Pancreas (tissue), 10 donors: ENCODE measurements at regions of chr2 and their contacts with region 1.

Region 1: GRCh38 chr2:58680755-58681310 is 439.7 kb upstream of the FANCL start:
- DNase-seq: no peak
- ATAC-seq: no peak
- H3K4me3 ChIP-seq: no peak overlapping the region
- H3K27ac ChIP-seq: no peak overlapping the region
- H3K4me1 ChIP-seq: no peaks in the 10 kb centered on the region
- H3K27me3 ChIP-seq: no peaks in the 10 kb centered on the region
- CTCF ChIP-seq: no peak

Region 2: DNA sequence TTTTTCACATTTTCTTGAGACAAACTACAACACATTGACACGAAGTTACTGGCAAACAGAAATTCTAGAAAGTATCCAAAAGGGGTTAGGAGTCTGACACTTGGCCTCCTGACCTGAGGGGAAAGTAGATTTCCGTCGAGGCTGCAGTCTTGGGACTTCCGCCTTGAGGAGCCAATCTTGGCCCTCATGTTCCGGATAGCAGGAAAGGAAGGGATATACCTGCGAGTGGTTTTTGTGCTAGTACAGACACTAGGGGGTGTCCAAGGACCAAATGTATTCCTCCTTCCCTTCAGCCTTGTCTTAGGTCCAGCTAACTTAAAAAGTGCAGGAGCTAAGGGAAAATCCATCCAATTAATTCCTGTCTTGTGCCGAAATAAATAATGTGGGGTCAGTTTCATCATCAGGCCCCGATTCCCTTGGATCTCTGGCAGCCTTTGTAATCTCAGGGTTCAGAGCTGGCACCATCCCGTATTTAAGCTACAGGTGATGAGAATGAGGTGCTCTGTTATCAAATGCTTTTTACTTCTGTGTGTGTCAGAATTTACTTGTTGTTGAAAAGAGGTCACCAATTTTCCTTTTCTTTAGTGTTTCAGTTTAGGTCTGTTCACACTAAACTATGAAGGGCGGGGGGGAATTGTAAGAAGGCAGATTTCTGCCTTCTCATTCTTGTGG is 109.5 kb before region 1 on chr2:
- intact Hi-C with region 1: loop called in 1 of 3 experiments (anchors 10 kb)
- DNase-seq: peak in 3 of 6 donors; percentile 23 to 58 (median 35)
- ATAC-seq: peak; percentile 91 to 97 (median 94)
- H3K4me3 ChIP-seq: no peak overlapping the region
- H3K27ac ChIP-seq: no peak overlapping the region
- H3K4me1 ChIP-seq: no peaks in the 10 kb centered on the region
- H3K27me3 ChIP-seq: peaks cover 0 to 5% (median 0%) of the 10 kb centered on the region in 4 donors
- CTCF ChIP-seq: peak; percentile 33 to 53 (median 42)